Motor neuron (in vitro differentiated cells): ENCODE measurements at regions of chr9 and their contacts with region 1.

Region 1: GRCh38 chr9:27864644-27865438 is 291.6 kb upstream of the C9orf72 start:
- ATAC-seq: peak; percentile 26 to 90 (median 82)
- H3K4me3 ChIP-seq: no peak overlapping the region
- H3K27ac ChIP-seq: no peak overlapping the region
- H3K4me1 ChIP-seq: peaks cover 0 to 9% of the 10 kb centered on the region in 2 donors

Region 2: GRCh38 chr9:27967210-27967609 is 102.4 kb after region 1 on chr9:
- in situ Hi-C with region 1: loop called in 1 of 9 experiments (anchors 25 kb)
- ATAC-seq: peak in 2 of 8 experiments; percentile 69 to 70
- H3K4me3 ChIP-seq: no peak overlapping the region
- H3K27ac ChIP-seq: no peak overlapping the region
- H3K4me1 ChIP-seq: no peaks in the 10 kb centered on the region